HepG2 (cell line): ENCODE measurements at regions of chr12 and their contacts with region 1.

Region 1: GRCh38 chr12:39103552-39104165 is 198.3 kb upstream of the CPNE8 start:
- DNase-seq: peak; percentile 59
- ATAC-seq: peak; percentile 94
- H3K4me3 ChIP-seq: no peak overlapping the region
- H3K27ac ChIP-seq: no peak overlapping the region
- H3K4me1 ChIP-seq: no peaks in the 10 kb centered on the region
- H3K27me3 ChIP-seq: no peaks in the 10 kb centered on the region
- CTCF ChIP-seq: peak; percentile 83
- EP300 ChIP-seq: no peak
- POLR2A ChIP-seq: no peak
- RAD21 ChIP-seq: peak; percentile 51; the same call in 1 of the 2 replicates

Region 2: DNA sequence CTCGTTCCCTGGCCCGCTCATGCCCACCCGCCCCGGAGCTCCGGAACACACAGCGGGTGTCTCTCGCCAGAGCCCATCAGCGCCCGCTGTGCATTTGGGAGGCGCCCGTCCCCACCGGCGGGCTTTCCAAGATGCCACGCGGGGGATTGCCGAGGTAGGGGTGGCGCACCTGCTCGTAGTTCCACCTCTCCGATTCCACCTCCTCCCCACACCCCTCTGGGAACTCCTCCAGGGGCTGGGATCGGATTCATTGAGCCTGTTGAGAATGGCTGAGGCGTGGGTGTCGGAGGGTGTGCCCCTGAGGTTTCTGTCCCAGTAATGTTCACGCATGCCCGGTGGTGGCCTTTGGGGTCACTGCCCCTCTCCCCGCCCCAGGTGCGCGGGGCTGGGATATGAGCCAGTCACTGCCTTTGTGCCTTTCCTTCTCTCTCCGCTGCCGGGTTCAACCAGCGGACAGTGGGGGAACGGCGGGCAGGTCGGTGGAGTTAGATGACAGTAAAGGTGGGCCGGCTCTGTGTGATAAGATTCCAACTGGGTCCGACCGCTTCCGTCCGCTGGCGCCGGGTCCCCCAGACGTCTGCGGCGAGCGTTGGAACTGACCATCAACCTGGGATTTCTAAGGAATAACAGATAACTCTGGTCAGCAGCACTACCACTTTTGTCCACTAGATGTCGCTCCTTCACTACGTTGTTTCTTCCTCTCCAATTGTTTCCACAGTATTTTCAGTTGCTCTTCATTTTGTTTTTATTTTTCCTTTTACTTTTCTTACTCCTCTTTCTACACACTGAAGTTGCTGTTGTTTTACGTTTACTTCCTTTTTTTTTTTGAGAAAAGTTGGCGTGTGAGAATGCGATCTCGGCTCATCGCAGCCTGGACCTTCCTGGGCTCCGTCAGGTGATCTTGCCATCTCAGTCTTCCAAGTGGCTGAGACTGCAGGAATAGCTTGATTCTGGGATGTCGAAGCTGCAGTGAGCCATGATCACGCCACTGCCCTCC is 965.1 kb before region 1 on chr12:
- CTCF ChIA-PET with region 1: no interaction called
- POLR2A ChIA-PET with region 1: no interaction called
- in situ Hi-C with region 1: no loop called
- intact Hi-C with region 1: loop called (anchors 10 kb)
- DNase-seq: peak; percentile 60
- ATAC-seq: peak; percentile 93
- H3K4me3 ChIP-seq: peak overlapping the region; percentile 42 to 60 (median 53)
- H3K27ac ChIP-seq: no peak overlapping the region
- H3K4me1 ChIP-seq: no peaks in the 10 kb centered on the region
- H3K27me3 ChIP-seq: no peaks in the 10 kb centered on the region
- CTCF ChIP-seq: peak; percentile 85
- EP300 ChIP-seq: no peak
- POLR2A ChIP-seq: no peak
- RAD21 ChIP-seq: peak; percentile 40; the same call in 1 of the 2 replicates

Region 3: GRCh38 chr12:38332814-38333213 is 770.8 kb before region 1 on chr12:
- CTCF ChIA-PET with region 1: interaction called, 9 read pairs
- POLR2A ChIA-PET with region 1: no interaction called
- in situ Hi-C with region 1: loop called (anchors 25 kb)
- intact Hi-C with region 1: loop called (anchors 1 kb)
- DNase-seq: no peak
- ATAC-seq: no peak
- H3K4me3 ChIP-seq: no peak overlapping the region
- H3K27ac ChIP-seq: no peak overlapping the region
- H3K4me1 ChIP-seq: no peaks in the 10 kb centered on the region
- H3K27me3 ChIP-seq: no peaks in the 10 kb centered on the region
- CTCF ChIP-seq: no peak
- EP300 ChIP-seq: no peak
- POLR2A ChIP-seq: no peak
- RAD21 ChIP-seq: no peak

Region 4: DNA sequence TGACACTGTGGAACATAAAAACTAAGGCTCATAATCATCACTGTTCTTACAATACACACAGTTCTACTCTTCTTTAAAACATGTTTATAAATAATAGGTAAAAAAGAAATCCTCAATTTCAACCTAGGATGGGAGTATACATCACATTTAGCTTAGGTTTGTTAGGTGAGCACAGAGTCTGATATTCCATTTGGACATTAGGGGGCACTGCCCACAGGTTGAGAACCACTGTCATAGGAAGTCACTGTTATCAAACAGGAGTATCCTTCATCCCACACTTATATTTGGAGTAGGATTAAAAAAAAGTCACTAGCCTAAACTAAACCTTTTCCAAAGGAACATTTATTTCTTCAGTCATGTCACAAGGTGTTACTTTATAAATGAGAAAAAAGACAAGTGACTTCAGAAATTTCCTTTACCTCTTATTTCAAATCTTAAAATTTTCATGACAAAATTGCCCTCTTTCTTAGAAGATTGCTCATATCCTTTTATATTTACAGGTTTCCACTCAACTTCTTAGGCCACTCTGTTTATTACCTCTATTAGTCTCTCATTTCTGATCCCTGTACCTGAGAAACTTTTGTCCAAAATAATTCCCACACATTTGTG is 438.9 kb before region 1 on chr12:
- CTCF ChIA-PET with region 1: interaction called, 3 read pairs
- POLR2A ChIA-PET with region 1: no interaction called
- in situ Hi-C with region 1: no loop called
- intact Hi-C with region 1: loop called (anchors 2 kb)
- DNase-seq: peak; percentile 16
- ATAC-seq: peak; percentile 75
- H3K4me3 ChIP-seq: no peak overlapping the region
- H3K27ac ChIP-seq: no peak overlapping the region
- H3K4me1 ChIP-seq: no peaks in the 10 kb centered on the region
- H3K27me3 ChIP-seq: no peaks in the 10 kb centered on the region
- CTCF ChIP-seq: peak; percentile 53
- EP300 ChIP-seq: no peak
- POLR2A ChIP-seq: no peak
- RAD21 ChIP-seq: no peak

Region 5: DNA sequence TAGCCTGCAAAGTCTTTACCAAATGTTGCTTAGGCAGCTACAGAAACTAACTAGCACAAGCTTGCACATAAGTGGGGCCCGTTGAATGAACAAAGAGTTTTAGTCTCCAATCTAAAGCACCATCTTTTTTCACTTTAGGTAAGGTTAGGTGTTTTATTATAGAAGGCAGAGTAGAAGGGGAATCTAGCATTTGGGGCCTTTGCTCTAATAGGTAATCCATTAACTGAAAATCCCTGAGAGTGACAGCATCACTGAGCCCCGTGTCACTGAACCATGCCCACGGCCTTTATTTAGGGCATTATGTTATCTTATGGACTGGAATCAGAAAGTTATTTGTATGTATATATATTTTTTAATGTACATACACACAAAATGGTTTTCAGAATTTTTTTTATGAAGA is 223.4 kb before region 1 on chr12:
- CTCF ChIA-PET with region 1: no interaction called
- POLR2A ChIA-PET with region 1: no interaction called
- in situ Hi-C with region 1: no loop called
- intact Hi-C with region 1: no loop called
- DNase-seq: no peak
- ATAC-seq: peak; percentile 54; the same call in 2 of the 3 replicates
- H3K4me3 ChIP-seq: no peak overlapping the region
- H3K27ac ChIP-seq: no peak overlapping the region
- H3K4me1 ChIP-seq: no peaks in the 10 kb centered on the region
- H3K27me3 ChIP-seq: no peaks in the 10 kb centered on the region
- CTCF ChIP-seq: no peak
- EP300 ChIP-seq: no peak
- POLR2A ChIP-seq: no peak
- RAD21 ChIP-seq: no peak

Region 6: DNA sequence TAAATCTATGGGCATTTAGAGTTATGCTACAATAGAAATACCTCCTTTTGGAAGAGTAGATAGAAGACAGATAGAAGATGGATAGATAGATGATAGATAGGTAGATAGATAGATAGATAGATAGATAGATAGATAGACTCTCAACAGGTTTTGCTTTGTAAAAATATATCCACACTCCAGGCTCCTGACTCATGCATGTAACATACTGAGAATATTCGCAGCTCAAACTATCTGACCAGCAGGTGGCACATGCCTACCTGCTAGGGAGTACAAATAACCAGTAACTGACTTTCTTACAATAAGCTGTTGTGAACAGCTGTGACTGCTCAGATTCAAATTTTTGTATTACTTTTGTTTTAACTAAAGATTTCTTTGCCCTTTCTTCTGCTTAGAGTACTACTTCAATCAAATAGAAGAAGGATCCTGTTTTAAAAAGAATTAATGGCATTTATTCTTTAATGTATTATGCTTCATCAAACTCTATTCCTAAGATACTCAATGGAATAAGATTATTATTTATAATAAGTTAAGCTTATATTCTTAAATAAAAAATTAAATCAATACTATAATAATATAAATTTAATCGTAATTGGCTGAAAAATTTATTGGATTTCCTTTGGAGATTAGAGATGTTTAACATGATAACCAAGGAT is 182.5 kb before region 1 on chr12:
- CTCF ChIA-PET with region 1: interaction called, 30 read pairs
- POLR2A ChIA-PET with region 1: no interaction called
- in situ Hi-C with region 1: loop called (anchors 5 kb)
- intact Hi-C with region 1: loop called (anchors 1 kb)
- DNase-seq: peak; percentile 65
- ATAC-seq: peak; percentile 93
- H3K4me3 ChIP-seq: no peak overlapping the region
- H3K27ac ChIP-seq: no peak overlapping the region
- H3K4me1 ChIP-seq: no peaks in the 10 kb centered on the region
- H3K27me3 ChIP-seq: no peaks in the 10 kb centered on the region
- CTCF ChIP-seq: peak; percentile 69
- EP300 ChIP-seq: no peak
- POLR2A ChIP-seq: no peak
- RAD21 ChIP-seq: peak; percentile 54; the same call in 1 of the 2 replicates

Region 7: GRCh38 chr12:39736406-39736805 is 632.7 kb after region 1 on chr12:
- CTCF ChIA-PET with region 1: no interaction called
- POLR2A ChIA-PET with region 1: no interaction called
- in situ Hi-C with region 1: no loop called
- intact Hi-C with region 1: no loop called
- DNase-seq: no peak
- ATAC-seq: no peak
- H3K4me3 ChIP-seq: no peak overlapping the region
- H3K27ac ChIP-seq: no peak overlapping the region
- H3K4me1 ChIP-seq: no peaks in the 10 kb centered on the region
- H3K27me3 ChIP-seq: no peaks in the 10 kb centered on the region
- CTCF ChIP-seq: no peak
- EP300 ChIP-seq: no peak
- POLR2A ChIP-seq: no peak
- RAD21 ChIP-seq: no peak